Activated T-helper 1 cell treated with anti-CD3 and anti-CD28 coated beads, Interleukin-12 subunit alpha, Interleukin-12 subunit beta, Interleukin-2, Interleukin-4 antibody, amounts not matched to agents 30 ng/mL and 10 ng/mL and 1 ng/mL, durations not matched to agents 14 hours and 24 hours and 36 hours (primary cell): ENCODE measurements at regions of chr11 and their contacts with region 1.

Region 1: GRCh38 chr11:102476812-102477211 is 24.2 kb upstream of the TMEM123 start:
- DNase-seq: no peak
- H3K4me3 Mint-ChIP-seq: peak overlapping the region; percentile 40
- H3K27ac Mint-ChIP-seq: peak overlapping the region; percentile 88
- H3K4me1 Mint-ChIP-seq: peaks cover 64% of the 10 kb centered on the region
- H3K27me3 Mint-ChIP-seq: peaks cover 2% of the 10 kb centered on the region

Region 2: DNA sequence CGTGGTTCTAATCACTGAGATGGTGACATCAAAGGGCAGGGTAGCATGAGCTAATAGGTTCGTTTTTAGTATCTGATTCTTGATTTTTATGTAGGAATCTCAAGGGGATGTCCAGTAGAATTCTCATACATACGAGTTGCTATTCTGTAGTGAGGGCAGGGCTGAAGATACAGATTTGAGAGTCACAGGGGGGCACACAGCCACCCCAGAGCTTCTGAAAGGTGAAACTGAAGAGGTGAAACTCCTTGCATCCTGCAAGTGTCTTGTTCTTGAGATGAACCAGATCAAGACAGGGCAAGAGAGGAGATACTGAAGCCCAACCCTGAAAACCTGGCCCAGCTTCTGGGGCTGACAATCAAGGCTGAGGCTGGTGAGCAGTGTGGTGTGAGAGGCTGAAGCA is 11.4 kb after region 1 on chr11:
- intact Hi-C with region 1: loop called (anchors 2 kb)
- DNase-seq: no peak
- H3K4me3 Mint-ChIP-seq: no peak overlapping the region
- H3K27ac Mint-ChIP-seq: no peak overlapping the region
- H3K4me1 Mint-ChIP-seq: peaks cover 48% of the 10 kb centered on the region
- H3K27me3 Mint-ChIP-seq: peaks cover 2% of the 10 kb centered on the region

Region 3: DNA sequence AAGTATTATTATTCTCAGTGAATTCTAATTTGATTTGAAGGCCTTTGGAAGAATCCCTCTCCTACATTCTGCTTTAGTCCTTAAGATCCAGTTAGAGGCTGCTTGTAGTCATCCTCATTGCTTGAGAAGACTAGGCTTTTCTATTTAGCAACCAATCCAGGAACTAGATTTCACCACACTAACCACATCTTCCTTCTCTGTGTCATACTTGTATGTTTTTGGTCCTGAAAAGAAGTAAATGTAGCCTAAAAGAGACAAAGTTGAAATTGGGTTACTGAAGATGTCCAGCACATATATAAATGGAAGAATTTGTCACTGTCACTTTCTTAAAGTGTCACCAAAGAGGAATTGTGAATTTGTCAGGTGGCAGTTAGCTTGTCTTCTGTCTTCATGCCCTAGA is 100.4 kb after region 1 on chr11:
- intact Hi-C with region 1: no loop called
- DNase-seq: no peak
- H3K4me3 Mint-ChIP-seq: no peak overlapping the region
- H3K27ac Mint-ChIP-seq: peak overlapping the region; percentile 2
- H3K4me1 Mint-ChIP-seq: peaks cover 46% of the 10 kb centered on the region
- H3K27me3 Mint-ChIP-seq: no peaks in the 10 kb centered on the region